A673 (cell line): ENCODE measurements at regions of chr10 and their contacts with region 1.

Region 1: DNA sequence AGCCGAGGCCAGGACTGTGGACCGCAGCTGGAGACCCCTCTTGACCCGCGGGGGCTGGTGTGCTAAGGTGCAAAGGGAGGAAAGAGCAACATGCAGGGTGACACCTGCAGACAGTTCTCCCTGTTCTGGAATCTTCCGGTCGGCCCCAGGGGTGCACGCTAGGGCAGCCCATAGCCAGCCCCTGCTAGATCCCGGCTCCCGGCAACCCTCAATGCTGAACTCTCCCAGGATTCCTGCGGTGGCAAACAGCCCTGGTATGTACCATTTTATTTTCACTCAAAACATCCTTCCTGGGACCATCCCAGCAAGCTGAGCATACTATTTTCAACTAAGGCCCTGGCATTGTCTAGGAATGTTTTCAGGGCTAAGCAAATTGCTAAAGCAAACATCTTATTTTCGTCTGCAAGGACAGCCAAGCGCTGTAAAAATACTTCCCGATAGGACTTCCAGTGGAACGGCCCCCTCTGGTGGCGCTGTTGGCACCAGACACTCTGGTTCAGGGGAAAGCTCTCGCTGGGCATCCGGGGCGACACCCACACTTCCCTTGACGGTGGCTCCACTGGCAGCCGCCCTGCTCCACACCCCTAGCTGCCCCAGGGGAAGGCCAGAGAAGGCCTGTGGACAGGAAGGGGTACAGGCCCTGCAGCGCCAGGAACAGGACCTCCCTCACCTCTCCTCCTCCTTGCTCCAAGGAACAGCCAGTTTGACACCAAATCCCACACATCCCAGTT is 99.4 kb downstream of the CTBP2 start:
- DNase-seq: peak; percentile 84
- H3K4me3 ChIP-seq: no peak overlapping the region
- H3K27ac ChIP-seq: peak overlapping the region; percentile 48
- H3K4me1 ChIP-seq: peaks cover 63% of the 10 kb centered on the region
- H3K27me3 ChIP-seq: no peaks in the 10 kb centered on the region
- CTCF ChIP-seq: peak; percentile 91

Region 2: DNA sequence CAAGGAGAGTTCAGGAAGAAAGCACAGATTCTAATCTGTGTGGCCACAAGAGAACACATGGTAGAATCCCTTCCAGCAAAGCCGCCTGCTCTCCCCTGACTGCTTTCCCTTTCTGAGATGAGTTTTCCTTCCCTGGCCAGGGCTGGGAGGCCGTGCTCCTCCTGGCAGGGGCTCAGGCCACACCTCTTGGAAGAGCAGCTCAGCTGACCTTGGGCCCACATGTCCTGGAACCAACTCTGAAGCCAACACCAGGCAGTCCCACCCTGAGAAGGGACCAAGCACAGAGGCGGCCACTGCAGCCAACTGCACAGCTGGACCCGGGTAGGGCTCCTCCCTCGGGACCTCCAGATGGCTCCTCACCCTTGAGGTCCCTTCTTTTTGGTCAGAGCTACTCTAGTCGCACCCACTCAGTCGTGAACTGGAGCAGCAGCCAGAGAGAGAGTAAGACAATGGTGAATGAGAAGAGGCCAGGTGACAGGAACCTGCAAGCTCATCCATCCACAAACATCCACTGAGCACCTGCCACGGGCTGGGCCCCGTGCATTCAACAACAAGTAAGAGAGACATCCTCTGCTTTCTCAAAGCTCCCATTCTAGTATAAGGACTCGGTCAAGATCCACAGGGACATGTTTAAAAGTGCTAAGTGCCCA is 357.1 kb before region 1 on chr10:
- CTCF ChIA-PET with region 1: no interaction called
- POLR2A ChIA-PET with region 1: no interaction called
- intact Hi-C with region 1: no loop called
- DNase-seq: no peak
- H3K4me3 ChIP-seq: no peak overlapping the region
- H3K27ac ChIP-seq: no peak overlapping the region
- H3K4me1 ChIP-seq: peaks cover 11% of the 10 kb centered on the region
- H3K27me3 ChIP-seq: no peaks in the 10 kb centered on the region
- CTCF ChIP-seq: no peak

Region 3: DNA sequence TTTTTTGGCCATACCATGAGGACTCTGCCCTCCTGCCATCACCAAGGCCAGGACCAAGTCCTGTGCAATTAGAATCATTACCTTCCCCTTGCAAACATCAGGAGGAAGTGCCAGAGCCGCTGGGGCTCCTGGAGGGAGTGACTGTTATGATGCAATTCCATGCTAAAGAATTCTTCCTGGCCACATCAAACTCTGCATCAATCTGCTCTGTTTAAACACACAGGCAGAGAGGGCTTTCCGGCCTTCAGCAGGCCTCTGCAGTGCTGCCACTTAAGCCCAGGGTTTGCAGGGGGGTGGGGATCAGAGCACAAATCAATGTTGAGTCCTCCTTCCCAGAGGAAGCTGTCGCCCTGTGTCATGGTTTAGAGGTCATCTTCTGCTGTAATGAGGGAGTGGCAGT is 41.2 kb after region 1 on chr10:
- CTCF ChIA-PET with region 1: no interaction called
- POLR2A ChIA-PET with region 1: no interaction called
- intact Hi-C with region 1: loop called (anchors 2 kb)
- DNase-seq: no peak
- H3K4me3 ChIP-seq: no peak overlapping the region
- H3K27ac ChIP-seq: no peak overlapping the region
- H3K4me1 ChIP-seq: peaks cover 29% of the 10 kb centered on the region
- H3K27me3 ChIP-seq: no peaks in the 10 kb centered on the region
- CTCF ChIP-seq: no peak

Region 4: GRCh38 chr10:125160856-125161706 is 100.1 kb after region 1 on chr10:
- CTCF ChIA-PET with region 1: no interaction called
- POLR2A ChIA-PET with region 1: no interaction called
- intact Hi-C with region 1: loop called (anchors 10 kb)
- DNase-seq: peak; percentile 96
- H3K4me3 ChIP-seq: peak overlapping the region; percentile 91
- H3K27ac ChIP-seq: peak overlapping the region; percentile 87
- H3K4me1 ChIP-seq: peaks cover 31% of the 10 kb centered on the region
- H3K27me3 ChIP-seq: no peaks in the 10 kb centered on the region
- CTCF ChIP-seq: peak; percentile 40; the same call in 1 of the 2 replicates

Region 5: GRCh38 chr10:125514206-125515186 is 453.5 kb after region 1 on chr10:
- CTCF ChIA-PET with region 1: no interaction called
- POLR2A ChIA-PET with region 1: no interaction called
- intact Hi-C with region 1: no loop called
- DNase-seq: peak; percentile 72
- H3K4me3 ChIP-seq: no peak overlapping the region
- H3K27ac ChIP-seq: no peak overlapping the region
- H3K4me1 ChIP-seq: peaks cover 15% of the 10 kb centered on the region
- H3K27me3 ChIP-seq: peaks cover 6% of the 10 kb centered on the region
- CTCF ChIP-seq: no peak